PC-9 (cell line): ENCODE measurements at regions of chr11 and their contacts with region 1.

Region 1: GRCh38 chr11:67401495-67402191 is at the start of gene PPP1CA:
- DNase-seq: peak; percentile 64 to 94
- H3K4me3 ChIP-seq: peak within 1 kb of the TSS; percentile 99
- H3K27ac ChIP-seq: peak within 1 kb of the TSS; percentile 41; the same call in 1 of the 2 replicates
- H3K4me1 ChIP-seq: peaks cover 14% of the 10 kb centered on the region
- H3K27me3 ChIP-seq: no peaks in the 10 kb centered on the region
- CTCF ChIP-seq: peak; percentile 35; the same call in 1 of the 2 replicates
- total RNA-seq, gene PPP1CA: 306 and 351 TPM in 2 replicates

Region 2: GRCh38 chr11:67118801-67119584 is 282.6 kb before region 1 on chr11 and contains the start of gene KDM2A:
- CTCF ChIA-PET with region 1: no interaction called
- POLR2A ChIA-PET with region 1: no interaction called
- intact Hi-C with region 1: no loop called
- DNase-seq: peak; percentile 91 to 98
- H3K4me3 ChIP-seq: peak within 1 kb of the TSS; percentile 83
- H3K27ac ChIP-seq: peak within 1 kb of the TSS; percentile 82
- H3K4me1 ChIP-seq: peaks cover 13% of the 10 kb centered on the region
- H3K27me3 ChIP-seq: no peaks in the 10 kb centered on the region
- CTCF ChIP-seq: no peak
- total RNA-seq, gene KDM2A: 117 and 120 TPM in 2 replicates

Region 3: DNA sequence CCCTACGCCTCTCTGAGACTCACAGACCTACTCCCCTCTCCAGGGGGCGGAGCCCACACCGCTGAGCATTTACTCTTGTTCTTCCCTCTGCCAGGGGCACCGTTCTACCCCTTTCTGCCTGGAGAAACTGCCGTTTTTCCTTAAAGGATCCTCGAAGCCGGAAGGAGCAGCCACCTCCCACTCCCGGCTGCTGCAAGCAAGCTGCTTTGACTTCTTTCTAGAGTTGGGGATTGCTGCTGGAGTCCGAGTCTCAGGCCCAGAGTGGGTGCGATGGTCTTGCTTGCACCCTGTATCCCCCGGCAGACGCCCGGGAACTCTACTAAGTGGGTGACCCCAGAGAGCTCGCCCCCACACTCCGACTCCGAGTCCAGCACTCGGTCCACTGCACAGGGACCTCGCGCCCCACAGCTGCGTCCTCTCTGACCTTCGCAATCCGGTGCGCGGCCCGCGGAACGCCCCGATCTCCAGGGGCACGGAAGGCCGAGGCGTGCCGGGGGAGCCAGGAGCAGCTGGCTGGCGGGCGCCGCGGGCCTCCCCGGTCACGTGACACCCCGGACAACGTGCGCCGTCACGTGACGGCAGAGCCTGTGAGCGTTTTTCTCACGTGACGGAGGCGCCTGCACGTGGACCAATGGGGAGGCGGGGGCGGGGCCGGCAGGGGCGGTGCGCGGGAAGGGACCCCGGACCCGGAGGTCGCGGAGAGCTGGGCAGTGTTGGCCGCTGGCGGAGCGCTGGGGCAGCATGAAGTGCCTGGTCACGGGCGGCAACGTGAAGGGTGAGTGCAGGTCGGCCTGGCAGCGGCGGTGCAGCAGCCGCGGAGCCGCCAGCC is 10.1 kb before region 1 on chr11 and contains the start of gene RAD9A:
- CTCF ChIA-PET with region 1: interaction called, 5 read pairs
- POLR2A ChIA-PET with region 1: interaction called, 12 read pairs
- intact Hi-C with region 1: no loop called
- DNase-seq: peak; percentile 82 to 94
- H3K4me3 ChIP-seq: peak within 1 kb of the TSS; percentile 89
- H3K27ac ChIP-seq: peak within 1 kb of the TSS; percentile 54
- H3K4me1 ChIP-seq: peaks cover 12% of the 10 kb centered on the region; the same call in 1 of the 2 replicates
- H3K27me3 ChIP-seq: no peaks in the 10 kb centered on the region
- CTCF ChIP-seq: no peak
- total RNA-seq, gene RAD9A: 62.8 and 79.8 TPM in 2 replicates

Region 4: DNA sequence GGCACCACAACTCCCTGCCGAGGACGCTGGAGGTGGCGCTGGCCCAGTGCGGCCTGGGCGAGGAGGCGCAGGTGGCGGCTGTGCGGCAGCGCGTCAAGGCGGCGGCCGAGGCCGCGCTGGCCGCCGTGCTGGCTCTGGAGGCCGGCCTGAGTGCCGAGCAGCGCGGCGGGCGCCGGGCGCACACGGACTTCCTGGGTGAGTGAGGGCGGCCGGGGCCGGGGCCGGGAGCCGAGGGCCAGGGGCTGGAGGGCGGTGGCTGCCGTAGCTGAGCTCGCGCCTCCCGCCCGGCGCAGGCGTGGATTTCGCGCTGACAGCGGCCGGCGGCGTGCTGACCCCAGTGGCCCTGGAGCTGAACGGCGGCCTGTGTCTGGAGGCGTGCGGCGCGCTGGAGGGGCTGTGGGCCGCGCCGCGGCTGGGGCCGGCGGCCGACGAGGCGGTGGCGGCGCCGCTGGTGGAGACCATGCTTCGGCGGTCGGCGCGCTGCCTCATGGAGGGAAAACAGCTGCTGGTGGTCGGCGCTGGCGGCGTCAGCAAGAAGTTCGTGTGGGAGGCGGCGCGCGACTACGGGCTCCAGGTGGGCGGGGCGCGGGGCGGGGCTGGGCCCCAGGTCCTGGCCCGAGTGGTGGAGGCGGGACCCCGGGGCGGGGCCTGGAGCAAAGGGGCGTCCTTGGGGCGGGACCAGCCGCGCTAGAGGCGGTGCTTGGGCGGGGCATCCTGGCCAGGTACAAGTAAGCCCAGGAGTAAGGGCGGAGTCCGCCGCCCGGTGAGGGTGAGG is 19.2 kb after region 1 on chr11:
- CTCF ChIA-PET with region 1: interaction called, 10 read pairs
- POLR2A ChIA-PET with region 1: interaction called, 4 read pairs
- intact Hi-C with region 1: no loop called
- DNase-seq: peak; percentile 83 to 100
- H3K4me3 ChIP-seq: peak overlapping the region; percentile 69
- H3K27ac ChIP-seq: no peak overlapping the region
- H3K4me1 ChIP-seq: peaks cover 17% of the 10 kb centered on the region
- H3K27me3 ChIP-seq: no peaks in the 10 kb centered on the region
- CTCF ChIP-seq: no peak

Region 5: DNA sequence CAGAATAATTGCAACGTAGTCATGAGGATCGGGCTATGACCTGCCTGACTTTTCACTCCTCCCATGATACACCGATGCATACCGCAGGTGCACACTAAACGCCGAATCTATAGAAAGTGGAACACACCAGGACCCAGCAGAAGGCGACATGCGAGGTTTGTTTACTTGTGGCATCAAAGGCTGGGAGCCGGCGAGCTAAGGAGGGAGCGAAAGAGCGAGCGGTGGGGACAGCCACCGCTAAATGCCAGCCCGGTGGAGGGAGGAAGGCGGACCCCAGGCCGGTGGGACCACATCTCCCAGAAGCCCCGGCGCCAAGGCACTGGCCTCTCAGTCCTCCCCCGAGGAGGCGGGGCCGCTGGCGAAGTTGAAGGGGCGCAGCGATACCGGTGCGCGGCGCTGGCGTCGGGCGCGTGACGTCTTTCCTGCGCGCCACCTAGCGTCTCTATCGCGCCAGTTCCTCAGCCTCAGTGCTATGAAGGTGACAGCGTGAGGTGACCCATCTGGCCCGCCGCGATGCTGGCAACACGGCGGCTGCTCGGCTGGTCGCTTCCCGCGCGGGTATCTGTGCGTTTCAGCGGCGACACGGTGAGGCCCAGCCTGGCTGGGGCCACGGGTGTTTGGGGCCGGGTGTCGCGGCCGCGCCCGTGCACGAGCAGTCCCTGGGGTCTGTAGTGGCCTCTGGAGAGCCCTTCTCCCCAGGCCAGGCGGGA is 205.0 kb after region 1 on chr11 and contains the start of gene NDUFV1:
- CTCF ChIA-PET with region 1: no interaction called
- POLR2A ChIA-PET with region 1: no interaction called
- intact Hi-C with region 1: loop called (anchors 1 kb)
- DNase-seq: peak; percentile 87 to 98
- H3K4me3 ChIP-seq: peak within 1 kb of the TSS; percentile 98
- H3K27ac ChIP-seq: no peak within 1 kb of the TSS
- H3K4me1 ChIP-seq: peaks cover 12% of the 10 kb centered on the region
- H3K27me3 ChIP-seq: 0 out of 2 replicates have a peak, but pooled peaks cover 4% of the 10 kb centered on the region
- CTCF ChIP-seq: peak; percentile 57
- total RNA-seq, gene NDUFV1: 321 and 463 TPM in 2 replicates